Activated naive CD4-positive, alpha-beta T cell treated with anti-CD3 and anti-CD28 coated beads for 36 hours (primary cell): ENCODE measurements at regions of chr22 and their contacts with region 1.

Region 1: DNA sequence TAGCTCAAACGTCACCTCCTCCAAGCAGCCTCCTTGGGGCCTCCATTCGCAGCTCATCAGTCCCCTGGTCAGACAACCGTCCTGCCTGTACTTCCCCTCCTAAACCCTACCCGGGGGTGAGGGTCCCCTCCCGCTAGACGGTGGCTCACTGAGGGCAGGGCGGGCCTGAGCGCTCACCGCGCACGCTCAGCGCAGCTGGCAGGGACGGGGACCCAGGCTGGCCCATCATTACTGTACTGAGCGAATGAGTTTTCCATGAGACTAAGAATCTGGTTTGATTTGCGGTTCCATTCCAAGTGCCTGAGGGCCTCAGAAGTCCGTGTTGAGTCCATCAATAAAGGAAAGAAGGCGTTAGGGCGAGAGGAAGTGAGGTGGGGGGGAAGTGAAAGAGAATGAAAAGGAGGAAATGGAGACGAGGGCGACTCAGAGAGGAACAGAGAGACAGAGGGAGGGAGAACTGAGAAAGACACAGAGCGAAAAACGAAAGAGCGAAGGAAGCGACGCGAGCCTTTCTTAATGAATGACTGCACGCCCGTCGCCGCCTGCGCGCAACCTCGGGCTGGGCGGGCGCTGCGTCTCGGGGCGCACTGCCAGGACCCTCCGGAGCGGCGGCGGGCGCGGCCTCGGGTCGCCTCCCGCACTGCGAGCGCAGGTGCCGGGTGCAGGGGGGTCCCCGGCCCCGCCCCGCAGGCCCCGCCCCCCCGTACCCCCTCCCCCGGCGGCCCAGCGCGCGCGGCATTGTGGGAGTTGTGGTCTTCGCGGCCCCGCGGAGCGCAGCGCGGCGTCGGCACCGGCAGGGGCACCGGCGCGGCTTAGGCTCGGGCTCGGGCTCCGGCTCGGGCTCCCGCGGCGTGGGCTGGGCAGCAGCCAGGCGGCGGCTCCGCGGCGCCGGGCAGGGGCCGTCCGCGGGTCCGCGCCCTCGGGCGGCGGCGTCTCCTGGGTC is at the start of gene ASPHD2:
- DNase-seq: peak; percentile 83
- H3K4me3 Mint-ChIP-seq: peak within 1 kb of the TSS; percentile 94
- H3K27ac Mint-ChIP-seq: peak within 1 kb of the TSS; percentile 99
- H3K4me1 Mint-ChIP-seq: peaks cover 51% of the 10 kb centered on the region
- H3K27me3 Mint-ChIP-seq: peaks cover 4% of the 10 kb centered on the region
- total RNA-seq, gene ASPHD2: 4.4 to 4.7 TPM

Region 2: DNA sequence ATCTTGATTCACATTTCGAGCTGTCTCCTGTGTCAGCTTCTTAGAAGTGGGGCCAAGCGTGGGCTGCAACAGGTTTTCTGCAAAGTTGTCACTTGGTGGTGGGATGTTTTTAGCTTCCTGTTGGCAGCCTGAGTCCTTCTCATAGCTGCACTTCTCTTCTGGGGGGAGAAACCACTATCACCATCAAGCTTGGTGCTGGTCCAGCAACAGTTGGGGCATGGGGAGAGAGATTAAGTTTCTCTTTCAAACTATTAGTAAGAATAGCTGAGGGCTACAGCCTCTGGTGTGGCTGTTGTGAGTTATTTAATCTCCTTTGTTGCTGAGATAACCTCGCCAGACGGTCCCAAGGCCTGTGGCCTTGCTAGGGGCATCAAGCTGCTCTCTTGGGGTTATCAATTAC is 1352.5 kb before region 1 on chr22:
- CTCF ChIA-PET with region 1: no interaction called
- intact Hi-C with region 1: loop called (anchors 5 kb)
- DNase-seq: peak; percentile 82
- H3K4me3 Mint-ChIP-seq: peak overlapping the region; percentile 43
- H3K27ac Mint-ChIP-seq: peak overlapping the region; percentile 87
- H3K4me1 Mint-ChIP-seq: peaks cover 63% of the 10 kb centered on the region
- H3K27me3 Mint-ChIP-seq: no peaks in the 10 kb centered on the region

Region 3: GRCh38 chr22:26398741-26399153 is 30.0 kb before region 1 on chr22:
- CTCF ChIA-PET with region 1: interaction called, 3 read pairs
- intact Hi-C with region 1: loop called (anchors 2 kb)
- DNase-seq: peak; percentile 84
- H3K4me3 Mint-ChIP-seq: no peak overlapping the region
- H3K27ac Mint-ChIP-seq: no peak overlapping the region
- H3K4me1 Mint-ChIP-seq: peaks cover 2% of the 10 kb centered on the region
- H3K27me3 Mint-ChIP-seq: no peaks in the 10 kb centered on the region

Region 4: DNA sequence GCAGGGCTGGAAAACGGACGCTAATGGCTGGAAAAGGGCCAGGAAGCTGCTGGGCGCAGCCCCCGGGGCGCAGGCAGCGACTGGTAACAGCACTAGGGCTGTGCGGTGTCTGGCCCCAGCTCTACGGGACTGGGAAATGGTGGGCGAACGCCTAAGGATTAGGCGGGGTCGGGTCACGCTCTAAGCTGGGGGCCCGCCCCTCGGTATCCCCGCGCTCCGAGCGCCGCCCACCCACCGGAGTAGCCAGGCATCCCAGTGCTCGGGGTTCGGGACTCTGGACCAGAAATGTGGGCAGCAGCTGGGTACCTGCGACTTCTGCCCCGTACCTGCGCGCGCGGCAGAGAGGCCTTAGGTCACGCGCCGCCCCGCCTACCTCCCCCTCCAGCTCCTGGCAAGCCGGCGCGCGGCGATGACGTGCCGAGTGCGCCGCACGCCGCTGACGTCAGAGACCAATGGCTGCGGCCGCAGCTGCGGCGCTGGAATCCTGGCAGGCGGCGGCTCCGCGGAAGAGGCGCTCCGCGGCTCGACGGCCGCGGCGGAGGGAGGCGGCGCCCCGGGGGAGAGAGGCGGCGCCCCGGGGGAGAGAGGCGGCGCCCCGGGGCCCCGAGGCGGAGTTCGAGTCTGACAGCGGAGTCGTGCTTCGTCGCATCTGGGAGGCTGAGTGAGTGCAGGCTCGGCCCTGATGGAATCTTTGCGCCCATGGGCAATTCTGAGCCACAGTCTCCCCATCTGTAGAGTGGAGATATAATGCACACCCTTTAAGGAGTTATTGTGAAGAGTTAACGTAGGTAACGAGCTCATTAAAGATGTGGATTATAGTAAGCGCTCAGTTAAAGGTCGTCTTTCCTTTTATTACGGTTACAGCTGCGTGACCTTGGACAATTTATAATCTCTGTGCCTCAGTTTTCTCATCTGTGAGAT is 54.9 kb after region 1 on chr22 and contains the starts of genes HPS4 and SRRD:
- CTCF ChIA-PET with region 1: interaction called, 3 read pairs
- intact Hi-C with region 1: loop called (anchors 1 kb)
- DNase-seq: peak; percentile 90
- H3K4me3 Mint-ChIP-seq: peak within 1 kb of the TSS; percentile 82
- H3K27ac Mint-ChIP-seq: peak within 1 kb of the TSS; percentile 84
- H3K4me1 Mint-ChIP-seq: peaks cover 59% of the 10 kb centered on the region
- H3K27me3 Mint-ChIP-seq: no peaks in the 10 kb centered on the region
- total RNA-seq, gene HPS4: 48.0 to 51.5 TPM
- total RNA-seq, gene SRRD: 20.8 to 21.6 TPM

Region 5: DNA sequence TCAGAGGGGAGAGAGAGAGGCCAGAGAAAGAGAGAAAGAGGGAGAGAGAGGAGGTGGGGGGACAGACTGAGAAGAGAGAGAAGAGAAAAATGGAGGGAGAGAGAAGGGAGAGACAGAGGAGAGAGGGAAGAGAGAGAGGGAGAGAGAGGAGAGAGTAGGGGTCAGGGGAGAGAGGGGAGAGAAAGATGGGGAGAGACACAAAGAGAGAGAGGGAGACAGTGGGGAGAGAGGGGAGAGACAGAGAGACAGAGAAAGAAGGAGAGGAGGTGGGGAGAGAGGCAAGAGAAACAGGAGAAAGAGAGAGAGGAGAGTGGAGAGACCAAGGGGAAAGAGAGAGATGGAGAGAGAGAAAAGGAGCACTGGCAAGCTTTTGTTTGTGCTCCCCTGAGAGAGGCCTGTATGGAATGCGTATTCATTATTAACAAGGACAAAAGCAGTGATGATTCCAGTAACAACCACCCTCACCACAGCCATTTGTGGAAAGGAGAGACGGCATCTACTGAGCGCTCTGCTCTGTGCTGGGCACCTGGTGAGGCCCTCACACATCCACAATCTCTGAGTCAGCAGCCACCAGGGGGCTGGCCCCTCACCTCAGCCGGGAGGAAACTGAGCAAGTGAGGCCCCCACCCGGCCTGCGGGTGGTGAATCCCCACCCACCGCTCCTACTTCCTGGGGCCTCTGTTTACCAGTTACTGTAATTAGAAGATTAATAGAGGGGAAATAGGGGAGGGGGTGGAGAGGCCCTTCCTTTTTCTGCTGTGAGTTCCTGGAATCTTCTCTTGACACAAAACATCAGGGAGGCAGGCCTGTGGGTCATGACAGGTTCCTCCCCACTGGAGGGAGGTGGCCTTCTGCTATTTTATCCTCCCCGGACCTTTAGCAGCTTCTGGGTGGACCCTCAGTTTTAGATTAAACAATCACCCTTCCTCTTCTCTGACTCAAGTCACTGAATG is 214.0 kb after region 1 on chr22:
- CTCF ChIA-PET with region 1: no interaction called
- intact Hi-C with region 1: loop called (anchors 1 kb)
- DNase-seq: peak; percentile 96
- H3K4me3 Mint-ChIP-seq: peak overlapping the region; percentile 60
- H3K27ac Mint-ChIP-seq: peak overlapping the region; percentile 95
- H3K4me1 Mint-ChIP-seq: peaks cover 52% of the 10 kb centered on the region
- H3K27me3 Mint-ChIP-seq: peaks cover 8% of the 10 kb centered on the region

Region 6: DNA sequence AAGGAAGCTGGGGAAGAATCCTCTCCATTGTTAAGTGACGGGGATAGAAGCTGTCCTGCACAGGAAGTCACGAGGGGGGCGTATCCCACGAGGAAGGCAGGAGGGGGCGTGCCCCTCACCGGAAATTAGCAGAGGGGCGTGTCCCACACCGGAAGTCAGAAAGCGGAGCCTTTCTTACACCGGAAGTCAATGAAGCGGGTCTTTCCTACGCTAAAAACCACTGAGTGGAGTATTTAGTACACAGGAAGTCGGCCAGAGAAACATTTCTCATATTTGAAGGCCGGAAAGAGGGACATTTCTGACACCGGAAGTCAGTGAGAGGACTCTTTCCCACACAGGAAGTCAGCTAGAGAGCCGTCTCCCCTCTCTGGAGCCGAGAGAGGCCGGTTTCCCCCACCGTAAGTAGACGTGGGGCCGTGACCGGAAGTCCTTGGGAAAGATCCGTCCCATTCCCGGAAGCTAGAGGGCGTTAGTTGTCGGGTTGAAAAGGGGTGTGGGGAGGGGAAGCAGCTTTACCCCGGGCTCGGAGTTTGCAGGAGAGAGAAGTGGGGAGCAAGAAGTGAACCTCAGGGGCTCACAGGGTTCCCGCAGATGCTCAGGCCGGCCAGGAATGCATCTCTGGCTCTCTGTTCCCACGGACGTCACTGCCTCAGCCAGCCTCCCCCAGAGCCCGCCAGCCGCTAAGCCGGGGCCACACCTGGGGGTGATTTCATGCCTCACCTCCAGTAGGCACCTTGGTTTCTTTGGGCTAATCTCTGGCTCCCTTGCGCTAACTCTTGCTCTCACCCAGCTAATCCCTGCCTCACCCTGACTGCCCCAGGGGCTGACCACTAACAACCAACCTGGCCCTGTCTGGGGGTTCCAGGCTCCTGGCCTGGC is 244.0 kb after region 1 on chr22:
- CTCF ChIA-PET with region 1: interaction called, 3 read pairs
- intact Hi-C with region 1: loop called (anchors 1 kb)
- DNase-seq: peak; percentile 98
- H3K4me3 Mint-ChIP-seq: peak overlapping the region; percentile 95
- H3K27ac Mint-ChIP-seq: peak overlapping the region; percentile 100
- H3K4me1 Mint-ChIP-seq: peaks cover 71% of the 10 kb centered on the region
- H3K27me3 Mint-ChIP-seq: no peaks in the 10 kb centered on the region